ENCODE measurements at regions of chr4 and their contacts with region 1.

Region 1: DNA sequence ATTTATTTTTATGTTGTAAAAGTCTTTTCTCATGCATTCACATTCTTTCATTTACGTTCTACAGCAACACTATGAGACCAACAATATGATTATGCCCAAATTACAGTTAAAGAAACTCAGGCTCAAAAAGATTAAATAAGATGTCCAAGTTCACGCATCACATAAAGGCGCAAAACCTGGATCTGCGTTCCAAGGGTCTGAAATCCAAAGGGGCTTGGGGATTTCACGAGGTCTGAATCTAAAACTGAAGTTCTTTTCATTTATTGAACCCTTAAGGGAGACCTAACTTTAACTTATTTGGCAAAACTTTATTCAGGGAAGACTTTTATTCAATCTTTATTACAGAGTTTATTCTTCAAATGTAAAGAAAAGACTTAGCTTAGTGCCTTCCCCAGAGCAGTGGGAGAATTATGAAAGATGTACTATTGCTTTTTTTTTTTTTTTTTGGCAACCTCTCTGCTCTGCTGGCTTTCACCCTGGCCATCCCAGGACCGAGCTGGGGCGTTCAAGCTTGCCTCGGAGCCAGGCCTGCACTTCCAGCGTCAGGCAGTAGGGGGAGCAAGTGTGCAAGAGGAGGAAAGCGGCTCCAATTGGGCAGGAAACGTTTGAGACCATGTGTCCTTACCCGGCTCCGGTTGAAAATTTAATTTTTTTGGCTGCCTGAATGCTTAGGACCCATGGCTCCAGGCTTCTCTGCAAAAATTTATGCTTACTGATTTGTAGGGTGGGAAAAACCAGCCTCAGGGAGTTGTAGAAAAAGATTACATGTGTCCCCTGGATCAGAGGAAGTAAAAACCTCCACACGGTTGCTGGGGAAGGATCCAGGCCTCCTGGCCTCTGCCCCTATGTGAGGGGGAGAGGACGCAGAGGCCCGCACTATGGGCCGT is 344.3 kb upstream of the KLF3 start:
- DNase-seq: peak; percentile 95
- H3K4me3 Mint-ChIP-seq: peak overlapping the region; percentile 77
- H3K27ac Mint-ChIP-seq: peak overlapping the region; percentile 85
- H3K4me1 Mint-ChIP-seq: peaks cover 34% of the 10 kb centered on the region
- H3K27me3 Mint-ChIP-seq: no peaks in the 10 kb centered on the region

Region 2: GRCh38 chr4:37686373-37687193 is 633.1 kb before region 1 on chr4 and contains the start of gene RELL1:
- CTCF ChIA-PET with region 1: no interaction called
- POLR2A ChIA-PET with region 1: no interaction called
- intact Hi-C with region 1: loop called (anchors 10 kb)
- DNase-seq: peak; percentile 100
- H3K4me3 Mint-ChIP-seq: peak within 1 kb of the TSS; percentile 86
- H3K27ac Mint-ChIP-seq: peak within 1 kb of the TSS; percentile 91
- H3K4me1 Mint-ChIP-seq: peaks cover 34% of the 10 kb centered on the region
- H3K27me3 Mint-ChIP-seq: no peaks in the 10 kb centered on the region
- total RNA-seq, gene RELL1: 15.0 to 16.0 TPM

Region 3: DNA sequence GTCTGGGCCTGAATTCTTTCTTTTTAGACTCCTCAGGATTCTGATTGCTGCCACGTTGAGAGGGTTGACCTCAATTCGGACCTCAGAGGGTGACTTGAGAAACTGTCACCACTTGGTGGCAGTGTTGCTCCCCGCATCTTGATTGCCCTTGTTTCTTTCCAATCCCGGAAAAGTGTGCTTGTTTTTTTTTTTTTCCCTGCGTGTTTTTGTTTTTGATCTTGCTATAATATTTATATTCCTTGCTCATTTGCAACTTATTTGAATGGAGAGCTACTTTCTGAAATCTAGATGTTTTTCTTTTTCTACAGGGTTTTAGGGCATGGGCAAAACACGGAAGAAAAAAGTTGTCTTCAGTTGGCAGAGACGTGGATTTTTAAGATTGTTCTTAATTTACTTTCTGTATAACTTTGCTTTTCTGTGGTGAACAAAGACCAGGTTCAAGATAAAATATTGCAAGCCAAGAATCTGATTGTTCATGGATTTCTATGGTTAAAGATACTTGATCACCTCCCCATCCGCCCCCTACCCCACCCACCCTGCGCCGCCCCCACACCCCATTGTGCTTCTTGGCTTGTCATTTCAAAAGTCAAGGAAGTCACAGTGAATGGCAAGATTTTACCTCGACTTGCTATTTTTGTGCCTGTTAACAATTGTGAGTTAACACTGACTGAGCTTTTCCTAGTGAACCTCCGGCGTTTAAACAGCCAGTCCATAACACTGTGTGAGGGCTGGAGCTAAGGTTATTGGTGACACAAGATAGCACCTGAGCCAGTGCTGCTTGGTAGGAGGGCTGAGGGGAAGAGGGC is 257.4 kb before region 1 on chr4:
- CTCF ChIA-PET with region 1: interaction called, 3 read pairs
- POLR2A ChIA-PET with region 1: no interaction called
- intact Hi-C with region 1: loop called (anchors 2 kb)
- DNase-seq: peak; percentile 80
- H3K4me3 Mint-ChIP-seq: peak overlapping the region; percentile 77
- H3K27ac Mint-ChIP-seq: peak overlapping the region; percentile 70
- H3K4me1 Mint-ChIP-seq: peaks cover 14% of the 10 kb centered on the region
- H3K27me3 Mint-ChIP-seq: no peaks in the 10 kb centered on the region

Region 4: GRCh38 chr4:38663801-38664705 is 344.4 kb after region 1 on chr4 and contains the start of gene KLF3:
- CTCF ChIA-PET with region 1: interaction called, 60 read pairs
- POLR2A ChIA-PET with region 1: interaction called, 3 read pairs
- intact Hi-C with region 1: no loop called
- DNase-seq: peak; percentile 86
- H3K4me3 Mint-ChIP-seq: peak within 1 kb of the TSS; percentile 83
- H3K27ac Mint-ChIP-seq: peak within 1 kb of the TSS; percentile 68
- H3K4me1 Mint-ChIP-seq: peaks cover 61% of the 10 kb centered on the region
- H3K27me3 Mint-ChIP-seq: no peaks in the 10 kb centered on the region
- total RNA-seq, gene KLF3: 9.1 to 9.9 TPM

Region 5: DNA sequence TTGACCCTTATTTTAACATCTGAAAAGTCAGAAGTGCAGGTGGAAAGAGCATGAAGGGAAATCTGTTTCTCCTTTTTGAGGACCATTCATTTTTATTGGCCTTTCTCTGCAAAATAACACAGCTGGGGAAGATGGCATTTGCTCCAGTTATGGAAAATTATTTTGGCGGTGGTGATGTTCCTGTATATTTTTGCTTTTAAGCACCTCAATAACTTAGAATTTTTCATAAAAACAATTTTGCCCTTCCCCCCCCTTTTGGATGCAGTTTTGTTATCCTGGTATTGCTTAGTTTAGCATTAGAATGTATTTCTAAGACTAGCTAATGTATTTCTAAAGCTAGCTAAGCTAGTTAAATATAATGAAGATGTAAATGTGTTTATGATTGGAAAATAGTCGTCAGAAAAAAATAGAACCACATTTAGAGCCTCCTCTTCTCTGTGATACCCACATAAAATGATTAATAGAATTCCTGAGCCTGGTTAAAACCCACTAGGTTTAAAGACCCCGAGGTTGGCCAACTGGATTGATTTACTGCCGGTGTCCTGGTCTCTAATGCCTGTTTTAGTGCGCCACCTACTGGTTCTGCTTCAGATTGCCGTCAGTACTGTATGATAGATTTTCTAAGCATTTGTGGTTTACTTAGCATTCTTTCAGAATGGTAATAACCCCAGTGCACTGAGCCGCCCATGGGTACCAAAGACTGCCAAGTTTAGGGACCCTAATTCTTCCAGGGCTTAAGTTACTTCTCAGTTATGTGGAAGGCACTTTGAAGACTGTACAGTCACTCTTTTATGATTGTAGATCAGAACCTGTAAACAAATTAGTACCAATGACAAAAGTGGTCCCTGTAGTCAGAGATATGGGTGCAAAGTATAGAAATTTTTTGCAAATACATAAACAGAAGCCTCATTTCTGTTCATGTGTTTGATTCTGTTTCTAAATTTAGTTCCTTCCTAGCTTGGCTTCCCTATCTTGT is 355.7 kb after region 1 on chr4:
- CTCF ChIA-PET with region 1: interaction called, 110 read pairs
- POLR2A ChIA-PET with region 1: interaction called, 5 read pairs
- intact Hi-C with region 1: loop called (anchors 1 kb)
- DNase-seq: peak; percentile 89
- H3K4me3 Mint-ChIP-seq: peak overlapping the region; percentile 22
- H3K27ac Mint-ChIP-seq: peak overlapping the region; percentile 19
- H3K4me1 Mint-ChIP-seq: peaks cover 79% of the 10 kb centered on the region
- H3K27me3 Mint-ChIP-seq: no peaks in the 10 kb centered on the region

Region 6: GRCh38 chr4:38730830-38731646 is 411.3 kb after region 1 on chr4:
- CTCF ChIA-PET with region 1: interaction called, 18 read pairs
- POLR2A ChIA-PET with region 1: interaction called, 3 read pairs
- intact Hi-C with region 1: loop called (anchors 2 kb)
- DNase-seq: peak; percentile 90
- H3K4me3 Mint-ChIP-seq: no peak overlapping the region
- H3K27ac Mint-ChIP-seq: no peak overlapping the region
- H3K4me1 Mint-ChIP-seq: peaks cover 14% of the 10 kb centered on the region
- H3K27me3 Mint-ChIP-seq: no peaks in the 10 kb centered on the region

Measured in activated CD4-positive, alpha-beta memory T cell treated with anti-CD3 and anti-CD28 coated beads for 36 hours (primary cell).